Activated CD4-positive, alpha-beta memory T cell treated with anti-CD3 and anti-CD28 coated beads for 36 hours (primary cell): ENCODE measurements at regions of chr2 and their contacts with region 1.

Region 1: DNA sequence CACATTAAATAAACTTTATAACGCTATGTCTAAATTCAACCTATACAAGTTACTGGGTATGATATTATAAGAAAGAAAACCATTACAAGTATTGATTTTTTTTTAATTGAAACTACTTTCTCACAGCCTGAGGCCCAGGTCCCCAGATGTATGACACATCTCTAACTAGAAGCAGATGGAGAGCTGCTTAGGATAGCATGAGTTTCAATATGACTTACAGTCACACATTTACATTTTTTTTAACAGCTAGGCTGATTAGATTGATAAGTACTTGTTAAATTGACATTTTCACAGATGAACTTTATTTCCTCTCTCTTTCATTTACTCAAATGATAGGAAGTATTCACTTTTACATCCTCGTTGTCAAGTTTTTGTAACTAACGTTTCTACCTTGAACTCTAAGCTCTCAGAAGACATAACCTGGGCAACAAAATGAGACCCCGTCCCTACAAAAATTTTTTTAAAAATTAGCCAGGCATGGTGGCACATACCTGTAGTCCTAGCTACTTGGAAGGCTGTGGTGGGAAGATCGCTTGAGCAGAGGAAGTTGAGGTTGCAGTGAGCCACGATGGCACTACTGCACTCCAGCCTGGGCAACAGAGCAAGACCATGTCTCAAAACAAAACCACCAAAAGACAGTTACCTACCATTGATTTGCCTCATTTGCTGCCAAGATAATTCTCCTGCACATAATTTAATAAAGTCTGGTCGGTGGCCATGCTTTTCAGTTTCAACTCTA is 52.4 kb downstream of the STK39 start:
- DNase-seq: peak; percentile 55
- H3K4me3 Mint-ChIP-seq: peak overlapping the region; percentile 66
- H3K27ac Mint-ChIP-seq: peak overlapping the region; percentile 95
- H3K4me1 Mint-ChIP-seq: peaks cover 85% of the 10 kb centered on the region
- H3K27me3 Mint-ChIP-seq: no peaks in the 10 kb centered on the region

Region 2: GRCh38 chr2:168030862-168031624 is 163.9 kb before region 1 on chr2:
- CTCF ChIA-PET with region 1: no interaction called
- POLR2A ChIA-PET with region 1: no interaction called
- intact Hi-C with region 1: loop called (anchors 10 kb)
- DNase-seq: peak; percentile 50
- H3K4me3 Mint-ChIP-seq: no peak overlapping the region
- H3K27ac Mint-ChIP-seq: peak overlapping the region; percentile 49
- H3K4me1 Mint-ChIP-seq: peaks cover 19% of the 10 kb centered on the region
- H3K27me3 Mint-ChIP-seq: no peaks in the 10 kb centered on the region

Region 3: DNA sequence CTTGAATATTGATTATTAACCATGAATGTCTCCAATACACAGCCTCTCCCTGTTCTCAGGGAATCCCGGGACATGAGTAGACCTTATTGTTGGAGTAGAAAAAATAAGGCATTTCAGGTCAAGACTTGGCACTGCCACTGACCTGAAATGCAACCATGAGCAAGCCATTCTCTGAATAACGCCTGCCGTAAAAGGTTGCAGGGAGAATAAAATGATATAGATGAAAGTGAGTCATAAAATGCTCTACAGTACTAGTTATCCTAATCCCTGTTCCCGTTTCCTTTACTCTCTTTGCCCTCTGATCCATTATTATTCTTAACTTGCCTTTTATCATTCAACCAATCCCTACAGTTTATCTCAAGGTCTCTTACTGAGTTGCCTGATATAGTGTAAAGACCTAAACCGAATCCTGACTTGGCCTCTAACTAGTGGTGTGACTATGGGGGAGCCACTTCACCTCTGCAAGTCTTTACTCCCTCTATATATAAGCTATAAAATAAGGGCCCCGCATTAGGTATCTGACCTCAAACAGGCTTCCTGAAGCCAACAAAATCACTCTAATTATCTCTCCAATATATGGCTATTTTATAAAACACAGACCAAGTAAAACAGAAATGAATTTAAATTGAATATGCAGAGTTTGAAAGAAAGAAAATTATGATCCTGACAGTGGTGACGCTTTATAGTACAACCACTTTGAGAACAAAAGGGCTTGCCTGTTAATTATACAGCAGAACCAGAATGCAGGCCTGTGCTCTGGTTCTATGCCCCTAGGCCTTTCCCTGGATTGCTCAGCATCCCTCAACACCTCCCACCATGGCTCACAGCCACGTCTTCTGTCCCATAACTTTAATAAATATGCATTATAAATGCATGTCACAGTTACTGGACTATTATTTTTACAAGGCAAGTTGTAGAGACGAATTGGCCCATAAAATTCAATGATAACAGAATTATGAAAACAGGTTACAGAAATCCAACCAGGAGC is 130.6 kb before region 1 on chr2:
- CTCF ChIA-PET with region 1: no interaction called
- POLR2A ChIA-PET with region 1: no interaction called
- intact Hi-C with region 1: no loop called
- DNase-seq: no peak
- H3K4me3 Mint-ChIP-seq: no peak overlapping the region
- H3K27ac Mint-ChIP-seq: no peak overlapping the region
- H3K4me1 Mint-ChIP-seq: peaks cover 2% of the 10 kb centered on the region
- H3K27me3 Mint-ChIP-seq: no peaks in the 10 kb centered on the region

Region 4: GRCh38 chr2:168174756-168175155 is 20.2 kb before region 1 on chr2:
- CTCF ChIA-PET with region 1: interaction called, 8 read pairs
- POLR2A ChIA-PET with region 1: no interaction called
- intact Hi-C with region 1: loop called (anchors 2 kb)
- DNase-seq: peak; percentile 25
- H3K4me3 Mint-ChIP-seq: no peak overlapping the region
- H3K27ac Mint-ChIP-seq: peak overlapping the region; percentile 29
- H3K4me1 Mint-ChIP-seq: peaks cover 48% of the 10 kb centered on the region
- H3K27me3 Mint-ChIP-seq: no peaks in the 10 kb centered on the region

Region 5: GRCh38 chr2:168210895-168211570 is 16.1 kb after region 1 on chr2:
- CTCF ChIA-PET with region 1: interaction called, 24 read pairs
- POLR2A ChIA-PET with region 1: interaction called, 29 read pairs
- intact Hi-C with region 1: loop called (anchors 1 kb)
- DNase-seq: no peak
- H3K4me3 Mint-ChIP-seq: peak overlapping the region; percentile 54
- H3K27ac Mint-ChIP-seq: peak overlapping the region; percentile 98
- H3K4me1 Mint-ChIP-seq: peaks cover 78% of the 10 kb centered on the region
- H3K27me3 Mint-ChIP-seq: no peaks in the 10 kb centered on the region

Region 6: DNA sequence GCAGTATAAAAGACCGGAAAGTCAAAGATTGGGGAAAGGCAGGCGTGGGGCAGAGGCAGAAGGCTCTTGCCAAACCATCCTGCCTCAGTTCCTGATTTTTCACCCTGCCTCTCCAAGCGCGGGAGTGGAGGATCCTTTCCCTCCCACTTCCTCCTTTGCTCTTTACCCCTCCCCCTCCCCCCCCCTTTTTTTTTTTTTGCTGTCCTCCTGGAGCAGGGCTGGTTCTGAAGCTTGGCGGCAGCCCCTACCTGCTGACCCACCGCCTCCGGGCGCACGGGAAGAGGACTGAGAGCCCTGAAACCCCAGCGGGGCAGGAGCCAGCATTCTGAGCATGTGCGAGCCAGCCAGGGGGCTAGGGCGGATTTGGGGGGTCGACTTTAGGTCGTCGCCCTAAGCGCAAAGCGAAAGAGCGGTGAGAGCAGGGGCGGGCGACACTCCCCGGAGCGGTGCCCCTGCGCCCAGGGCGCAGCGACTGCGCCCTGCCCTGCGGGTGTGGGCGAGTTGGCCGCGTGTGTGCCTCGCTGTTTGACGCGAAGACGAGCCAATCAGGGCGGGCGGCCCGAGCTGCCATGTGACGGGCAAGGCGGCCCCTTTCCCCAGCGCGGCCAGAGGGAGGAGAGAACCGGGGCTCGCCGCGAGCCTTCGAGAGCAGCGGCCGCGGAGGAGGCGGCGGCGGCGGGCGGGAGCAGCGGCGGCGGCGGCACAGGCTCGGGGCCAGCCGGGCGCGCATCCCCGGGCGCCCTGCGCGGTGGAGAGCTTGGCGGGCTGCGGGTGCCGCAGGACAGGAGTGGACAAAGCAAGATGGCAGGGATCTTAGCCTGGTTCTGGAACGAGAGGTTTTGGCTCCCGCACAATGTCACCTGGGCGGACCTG is 260.9 kb after region 1 on chr2 and contains the start of gene CERS6:
- CTCF ChIA-PET with region 1: no interaction called
- POLR2A ChIA-PET with region 1: no interaction called
- intact Hi-C with region 1: loop called (anchors 10 kb)
- DNase-seq: peak; percentile 93
- H3K4me3 Mint-ChIP-seq: no peak within 1 kb of the TSS
- H3K27ac Mint-ChIP-seq: peak within 1 kb of the TSS; percentile 31
- H3K4me1 Mint-ChIP-seq: peaks cover 28% of the 10 kb centered on the region
- H3K27me3 Mint-ChIP-seq: no peaks in the 10 kb centered on the region
- total RNA-seq, gene CERS6: 8.9 to 9.2 TPM

Region 7: DNA sequence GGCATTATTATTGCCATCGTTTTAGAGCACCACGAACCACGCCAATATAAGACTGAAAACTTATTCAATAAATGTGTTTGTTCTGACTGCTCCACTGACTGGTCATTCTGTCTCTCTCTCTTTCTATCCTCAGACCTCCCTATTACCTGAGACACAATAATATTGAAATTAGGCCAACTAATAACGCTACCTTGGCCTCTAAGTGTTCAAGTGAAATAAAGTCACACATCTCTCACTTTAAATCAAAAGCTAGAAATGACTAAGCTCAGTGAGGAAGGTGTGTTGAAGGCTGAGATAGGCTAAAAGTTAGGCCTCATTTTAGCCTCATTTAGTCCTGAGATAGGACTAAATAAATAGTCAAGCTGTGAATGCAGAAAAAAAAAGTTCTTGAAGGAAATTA is 745.0 kb after region 1 on chr2:
- CTCF ChIA-PET with region 1: no interaction called
- POLR2A ChIA-PET with region 1: no interaction called
- intact Hi-C with region 1: no loop called
- DNase-seq: no peak
- H3K4me3 Mint-ChIP-seq: no peak overlapping the region
- H3K27ac Mint-ChIP-seq: no peak overlapping the region
- H3K4me1 Mint-ChIP-seq: peaks cover 4% of the 10 kb centered on the region
- H3K27me3 Mint-ChIP-seq: peaks cover 8% of the 10 kb centered on the region